ENCODE measurements at regions of chr5 and their contacts with region 1.

Region 1: GRCh38 chr5:65925601-65926275 is 637 bp upstream of the ERBIN start:
- DNase-seq: peak; percentile 74
- ATAC-seq: peak; percentile 59
- H3K4me3 Mint-ChIP-seq: peak overlapping the region; percentile 92
- H3K27ac Mint-ChIP-seq: peak overlapping the region; percentile 91
- H3K4me1 Mint-ChIP-seq: peaks cover 23% of the 10 kb centered on the region
- H3K27me3 Mint-ChIP-seq: peaks cover 2% of the 10 kb centered on the region
- CTCF ChIP-seq: no peak

Region 2: GRCh38 chr5:65721720-65722574 is 203.8 kb before region 1 on chr5 and contains the starts of genes NLN and SGTB:
- CTCF ChIA-PET with region 1: no interaction called
- POLR2A ChIA-PET with region 1: interaction called, 9 read pairs
- intact Hi-C with region 1: loop called (anchors 5 kb)
- DNase-seq: peak; percentile 84
- ATAC-seq: peak; percentile 96
- H3K4me3 Mint-ChIP-seq: peak within 1 kb of the TSS; percentile 86
- H3K27ac Mint-ChIP-seq: peak within 1 kb of the TSS; percentile 93
- H3K4me1 Mint-ChIP-seq: peaks cover 13% of the 10 kb centered on the region
- H3K27me3 Mint-ChIP-seq: no peaks in the 10 kb centered on the region
- CTCF ChIP-seq: no peak
- total RNA-seq, gene NLN: 38.4 to 42.5 TPM
- total RNA-seq, gene SGTB: 17.0 to 18.5 TPM

Region 3: GRCh38 chr5:65809817-65810531 is 115.8 kb before region 1 on chr5:
- CTCF ChIA-PET with region 1: no interaction called
- POLR2A ChIA-PET with region 1: no interaction called
- intact Hi-C with region 1: loop called (anchors 10 kb)
- DNase-seq: no peak
- ATAC-seq: no peak
- H3K4me3 Mint-ChIP-seq: no peak overlapping the region
- H3K27ac Mint-ChIP-seq: no peak overlapping the region
- H3K4me1 Mint-ChIP-seq: peaks cover 9% of the 10 kb centered on the region
- H3K27me3 Mint-ChIP-seq: no peaks in the 10 kb centered on the region
- CTCF ChIP-seq: no peak

Region 4: GRCh38 chr5:65984098-65984885 is 58.6 kb after region 1 on chr5:
- CTCF ChIA-PET with region 1: no interaction called
- POLR2A ChIA-PET with region 1: no interaction called
- intact Hi-C with region 1: no loop called
- DNase-seq: no peak
- ATAC-seq: no peak
- H3K4me3 Mint-ChIP-seq: no peak overlapping the region
- H3K27ac Mint-ChIP-seq: no peak overlapping the region
- H3K4me1 Mint-ChIP-seq: peaks cover 57% of the 10 kb centered on the region
- H3K27me3 Mint-ChIP-seq: no peaks in the 10 kb centered on the region
- CTCF ChIP-seq: no peak

Region 5: DNA sequence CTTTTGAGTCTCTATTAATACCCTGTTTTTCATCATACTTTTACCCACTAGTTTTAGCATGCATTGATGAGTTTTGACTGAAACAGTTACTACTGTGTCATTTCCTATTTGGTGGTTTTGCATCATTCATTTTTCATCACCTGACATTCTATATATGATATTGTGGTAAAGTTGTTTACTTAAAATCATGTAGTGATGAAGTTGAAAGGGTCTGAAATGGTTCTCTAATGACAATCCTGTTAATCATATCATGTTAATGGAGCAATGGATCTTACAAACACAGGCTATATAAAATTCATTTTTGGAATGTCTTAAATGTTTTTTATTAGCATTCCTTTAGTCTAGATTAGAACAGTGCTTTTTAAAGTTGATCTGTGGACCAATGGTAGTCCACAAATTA is 84.7 kb after region 1 on chr5:
- CTCF ChIA-PET with region 1: no interaction called
- POLR2A ChIA-PET with region 1: no interaction called
- intact Hi-C with region 1: loop called (anchors 5 kb)
- DNase-seq: no peak
- ATAC-seq: peak; percentile 79
- H3K4me3 Mint-ChIP-seq: no peak overlapping the region
- H3K27ac Mint-ChIP-seq: peak overlapping the region; percentile 85
- H3K4me1 Mint-ChIP-seq: peaks cover 46% of the 10 kb centered on the region
- H3K27me3 Mint-ChIP-seq: no peaks in the 10 kb centered on the region
- CTCF ChIP-seq: no peak

Measured in activated CD8-positive, alpha-beta T cell treated with anti-CD3 and anti-CD28 coated beads for 36 hours (primary cell).